HEK293 (cell line): ENCODE measurements at regions of chr6 and their contacts with region 1.

Region 1: GRCh38 chr6:82363351-82364086 is at the start of gene TPBG:
- H3K4me3 ChIP-seq: peak within 1 kb of the TSS; percentile 85
- H3K27ac ChIP-seq: peak within 1 kb of the TSS; percentile 92
- H3K4me1 ChIP-seq: peaks cover 8% of the 10 kb centered on the region
- CTCF ChIP-seq: peak; percentile 86

Region 2: GRCh38 chr6:82396964-82397751 is 33.6 kb after region 1 on chr6:
- CTCF ChIA-PET with region 1: interaction called, 3 read pairs
- POLR2A ChIA-PET with region 1: interaction called, 11 read pairs
- H3K4me3 ChIP-seq: no peak overlapping the region
- H3K27ac ChIP-seq: peak overlapping the region; percentile 53
- H3K4me1 ChIP-seq: peaks cover 19% of the 10 kb centered on the region
- CTCF ChIP-seq: no peak